ENCODE measurements at regions of chr19 and their contacts with region 1.

Region 1: DNA sequence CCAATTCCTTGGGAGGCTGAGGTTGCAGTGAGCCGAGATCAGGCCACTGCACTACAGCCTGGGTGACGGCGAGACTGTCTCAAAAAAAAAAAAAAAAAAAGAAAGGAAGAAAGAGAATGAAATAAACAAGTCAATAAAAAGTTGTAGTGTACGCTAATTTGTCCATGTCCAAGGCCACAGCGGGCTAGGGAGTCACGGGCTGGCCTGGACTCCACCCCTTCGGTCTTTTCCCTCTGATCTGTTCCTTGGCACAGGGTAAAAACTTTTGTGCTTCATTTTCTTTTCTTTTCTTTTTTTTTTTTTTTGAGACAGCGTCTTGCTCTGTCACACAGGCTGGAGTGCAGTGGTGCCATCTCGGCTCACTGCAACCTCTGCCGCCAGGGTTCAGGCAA is 19.4 kb upstream of the MKNK2 start:
- DNase-seq: no peak
- H3K4me3 ChIP-seq: no peak overlapping the region
- H3K27ac ChIP-seq: no peak overlapping the region
- H3K4me1 ChIP-seq: peaks cover 0 to 6% of the 10 kb centered on the region in 2 donors
- H3K27me3 ChIP-seq: no peaks in the 10 kb centered on the region
- CTCF ChIP-seq: no peak

Region 2: GRCh38 chr19:1929021-1929742 is 141.2 kb before region 1 on chr19:
- intact Hi-C with region 1: loop called (anchors 2 kb)
- DNase-seq: peak in 1 of 2 donors; percentile 90
- H3K4me3 ChIP-seq: peak overlapping the region; percentile 36 to 59
- H3K27ac ChIP-seq: no peak overlapping the region
- H3K4me1 ChIP-seq: peaks cover 3 to 9% of the 10 kb centered on the region in 2 donors
- H3K27me3 ChIP-seq: no peaks in the 10 kb centered on the region
- CTCF ChIP-seq: peak; percentile 90 to 93 (median 92)

Measured in ascending aorta (tissue), 2 donors.